Caco-2 (cell line): ENCODE measurements at regions of chr7 and their contacts with region 1.

Region 1: DNA sequence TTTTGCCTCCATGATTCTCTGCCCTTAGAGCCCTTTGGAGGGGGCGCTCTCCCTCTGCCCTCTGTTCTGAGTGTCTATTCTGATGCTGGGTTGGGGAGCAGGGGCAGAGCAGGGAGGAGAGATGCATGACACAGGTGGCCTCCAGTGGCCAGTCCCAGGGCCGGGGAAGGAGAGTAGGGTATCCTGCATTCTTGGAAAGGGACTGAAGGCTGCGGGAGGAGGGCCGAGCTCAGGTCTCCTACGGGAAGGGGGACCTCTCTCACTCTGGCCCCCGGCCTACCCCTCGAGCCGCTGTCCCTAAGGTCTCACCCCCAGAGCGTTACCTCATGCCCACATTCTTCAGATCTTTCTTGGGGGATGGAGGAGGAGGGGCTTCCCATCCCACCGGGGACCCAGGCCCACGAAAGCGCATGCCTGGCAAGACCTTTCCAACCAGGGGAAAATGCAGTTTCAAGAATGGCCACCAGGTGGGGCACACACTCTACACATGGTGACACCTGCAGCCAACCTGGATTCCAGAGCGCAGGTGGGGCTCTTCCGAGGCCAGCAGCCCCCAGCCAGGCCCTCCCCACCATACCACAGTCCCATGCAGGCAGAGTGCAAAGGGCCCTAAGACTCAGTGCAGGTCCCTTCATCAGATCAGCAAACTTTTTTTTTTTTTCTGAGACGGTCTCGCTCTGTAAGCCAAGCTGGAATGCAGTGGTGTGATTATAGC is 86.4 kb downstream of the MYL10 start:
- DNase-seq: peak; percentile 83 to 90
- H3K4me3 ChIP-seq: no peak overlapping the region
- H3K4me3 Mint-ChIP-seq: no peak overlapping the region
- H3K27ac Mint-ChIP-seq: peak overlapping the region; percentile 81
- H3K4me1 ChIP-seq: 0 out of 2 replicates have a peak, but pooled peaks cover 3% of the 10 kb centered on the region
- H3K4me1 Mint-ChIP-seq: peaks cover 6% of the 10 kb centered on the region
- H3K27me3 ChIP-seq: no peaks in the 10 kb centered on the region
- H3K27me3 Mint-ChIP-seq: no peaks in the 10 kb centered on the region
- CTCF ChIP-seq: peak; percentile 86 to 96

Region 2: DNA sequence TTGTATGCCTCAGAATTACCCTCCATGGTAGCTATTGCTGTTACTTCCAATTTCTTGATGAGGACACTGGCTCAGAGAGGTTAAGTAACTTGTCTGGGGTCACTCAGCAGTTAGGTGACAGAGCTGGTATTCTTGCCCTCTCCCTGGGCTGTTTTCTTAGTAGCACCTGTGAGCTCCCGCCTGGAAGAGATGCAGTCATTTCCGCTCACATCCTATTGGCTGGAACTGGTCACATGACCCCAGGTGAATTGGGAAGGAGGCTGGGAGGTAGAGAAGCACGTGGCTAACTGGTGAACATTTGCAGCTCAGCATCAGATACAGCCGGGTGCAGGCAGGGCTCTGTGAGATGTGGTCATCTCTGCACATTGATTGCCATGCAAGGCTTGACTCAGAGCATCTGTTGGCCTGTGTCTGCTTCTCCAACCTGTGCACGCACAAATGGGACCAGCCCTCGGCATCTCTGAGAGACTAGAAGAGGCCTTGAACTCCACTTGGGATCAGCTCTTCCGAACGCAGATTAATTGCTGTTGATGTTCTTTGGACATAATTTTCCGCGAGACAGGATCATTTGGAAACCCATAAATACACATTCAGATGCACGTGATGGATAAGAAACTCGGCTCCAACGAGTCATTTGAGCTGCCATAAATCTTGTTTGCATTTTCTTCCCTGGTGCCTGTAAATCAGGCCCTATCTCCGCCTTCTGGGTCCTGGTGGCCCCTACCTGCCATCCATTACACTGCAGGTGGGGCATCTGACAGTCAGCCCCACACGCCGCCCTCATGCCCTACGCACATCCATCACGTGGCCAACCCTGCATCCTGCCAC is 43.6 kb after region 1 on chr7:
- CTCF ChIA-PET with region 1: interaction called, 16 read pairs
- POLR2A ChIA-PET with region 1: no interaction called
- intact Hi-C with region 1: loop called (anchors 2 kb)
- DNase-seq: peak; percentile 72 to 89
- H3K4me3 ChIP-seq: no peak overlapping the region
- H3K4me3 Mint-ChIP-seq: peak overlapping the region; percentile 44
- H3K27ac Mint-ChIP-seq: peak overlapping the region; percentile 74
- H3K4me1 ChIP-seq: peaks cover 56% of the 10 kb centered on the region
- H3K4me1 Mint-ChIP-seq: peaks cover 48% of the 10 kb centered on the region
- H3K27me3 ChIP-seq: no peaks in the 10 kb centered on the region
- H3K27me3 Mint-ChIP-seq: no peaks in the 10 kb centered on the region
- CTCF ChIP-seq: peak in 1 of 2 experiments; percentile 28

Region 3: DNA sequence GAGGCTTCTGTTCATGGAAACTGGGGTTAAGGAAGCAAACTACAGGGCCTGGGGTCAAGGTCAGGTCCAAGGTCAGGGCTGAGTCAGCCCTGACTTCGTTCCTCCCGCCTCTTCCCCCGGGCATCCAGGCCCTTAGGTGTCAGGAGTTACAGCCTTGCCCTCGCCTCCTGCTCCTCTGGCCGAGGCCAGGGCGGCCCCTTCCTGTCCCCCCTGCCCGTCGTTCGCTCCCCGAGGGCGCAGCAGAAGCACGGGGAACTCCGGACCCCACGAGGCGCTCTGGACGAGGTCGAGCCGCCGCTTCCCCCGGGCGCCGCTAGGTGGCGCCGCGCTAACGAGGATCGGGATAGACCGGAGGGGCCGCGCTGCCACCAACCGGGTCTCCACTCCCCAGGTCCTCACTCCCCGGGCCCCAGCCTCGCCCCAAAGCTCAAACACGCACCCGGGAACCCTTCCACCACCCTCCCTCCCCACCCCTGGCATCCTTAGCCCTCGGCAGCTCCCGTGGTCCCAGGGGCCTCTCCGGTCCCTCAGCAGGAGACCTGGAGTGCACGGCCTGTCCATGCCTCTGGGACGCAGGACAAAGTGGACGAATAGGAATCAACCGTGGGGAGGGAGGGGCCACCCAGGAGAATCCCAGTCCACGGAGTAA is 145.6 kb after region 1 on chr7:
- CTCF ChIA-PET with region 1: interaction called, 5 read pairs
- POLR2A ChIA-PET with region 1: no interaction called
- intact Hi-C with region 1: loop called (anchors 2 kb)
- DNase-seq: peak; percentile 80 to 91
- H3K4me3 ChIP-seq: peak overlapping the region; percentile 42
- H3K4me3 Mint-ChIP-seq: no peak overlapping the region
- H3K27ac Mint-ChIP-seq: no peak overlapping the region
- H3K4me1 ChIP-seq: peaks cover 19% of the 10 kb centered on the region
- H3K4me1 Mint-ChIP-seq: peaks cover 13% of the 10 kb centered on the region
- H3K27me3 ChIP-seq: no peaks in the 10 kb centered on the region
- H3K27me3 Mint-ChIP-seq: no peaks in the 10 kb centered on the region
- CTCF ChIP-seq: peak; percentile 93 to 94

Region 4: DNA sequence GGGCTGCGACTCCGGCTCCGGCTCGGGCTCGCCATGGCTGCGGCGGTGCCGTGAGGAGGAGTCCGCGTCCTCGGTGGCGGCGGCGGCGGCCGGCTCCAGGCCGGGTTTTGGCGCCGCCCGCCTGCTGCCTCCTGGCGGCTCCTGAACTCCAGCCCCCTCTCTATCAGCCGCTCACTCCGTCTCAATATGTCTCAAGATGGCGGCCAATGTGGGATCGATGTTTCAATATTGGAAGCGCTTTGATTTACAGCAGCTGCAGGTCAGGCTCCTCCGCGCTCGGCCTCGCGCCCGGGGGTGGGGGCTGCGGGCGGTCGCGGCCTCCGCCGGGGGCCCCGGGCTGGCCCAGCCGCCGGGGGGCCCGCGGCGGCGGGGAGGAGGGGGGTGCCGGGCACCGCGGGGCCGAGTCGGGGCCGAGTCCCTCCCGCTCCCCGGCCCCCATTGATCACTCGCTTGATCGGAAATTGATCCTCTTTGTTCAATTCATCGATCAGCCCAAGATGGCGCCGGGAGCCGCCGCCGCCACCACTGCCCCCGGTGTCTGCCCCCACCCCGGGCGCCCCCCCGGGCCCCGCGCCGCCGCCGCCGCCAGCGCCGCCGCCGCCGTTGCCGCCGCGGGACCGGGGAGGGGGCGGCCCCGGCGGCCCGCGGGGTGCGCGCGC is 273.3 kb after region 1 on chr7:
- CTCF ChIA-PET with region 1: interaction called, 13 read pairs
- POLR2A ChIA-PET with region 1: no interaction called
- intact Hi-C with region 1: loop called (anchors 1 kb)
- DNase-seq: peak; percentile 85 to 86
- H3K4me3 ChIP-seq: peak overlapping the region; percentile 99
- H3K4me3 Mint-ChIP-seq: peak overlapping the region; percentile 96
- H3K27ac Mint-ChIP-seq: no peak overlapping the region
- H3K4me1 ChIP-seq: peaks cover 32% of the 10 kb centered on the region
- H3K4me1 Mint-ChIP-seq: peaks cover 25% of the 10 kb centered on the region
- H3K27me3 ChIP-seq: no peaks in the 10 kb centered on the region
- H3K27me3 Mint-ChIP-seq: no peaks in the 10 kb centered on the region
- CTCF ChIP-seq: peak in 1 of 2 experiments; percentile 23

Region 5: DNA sequence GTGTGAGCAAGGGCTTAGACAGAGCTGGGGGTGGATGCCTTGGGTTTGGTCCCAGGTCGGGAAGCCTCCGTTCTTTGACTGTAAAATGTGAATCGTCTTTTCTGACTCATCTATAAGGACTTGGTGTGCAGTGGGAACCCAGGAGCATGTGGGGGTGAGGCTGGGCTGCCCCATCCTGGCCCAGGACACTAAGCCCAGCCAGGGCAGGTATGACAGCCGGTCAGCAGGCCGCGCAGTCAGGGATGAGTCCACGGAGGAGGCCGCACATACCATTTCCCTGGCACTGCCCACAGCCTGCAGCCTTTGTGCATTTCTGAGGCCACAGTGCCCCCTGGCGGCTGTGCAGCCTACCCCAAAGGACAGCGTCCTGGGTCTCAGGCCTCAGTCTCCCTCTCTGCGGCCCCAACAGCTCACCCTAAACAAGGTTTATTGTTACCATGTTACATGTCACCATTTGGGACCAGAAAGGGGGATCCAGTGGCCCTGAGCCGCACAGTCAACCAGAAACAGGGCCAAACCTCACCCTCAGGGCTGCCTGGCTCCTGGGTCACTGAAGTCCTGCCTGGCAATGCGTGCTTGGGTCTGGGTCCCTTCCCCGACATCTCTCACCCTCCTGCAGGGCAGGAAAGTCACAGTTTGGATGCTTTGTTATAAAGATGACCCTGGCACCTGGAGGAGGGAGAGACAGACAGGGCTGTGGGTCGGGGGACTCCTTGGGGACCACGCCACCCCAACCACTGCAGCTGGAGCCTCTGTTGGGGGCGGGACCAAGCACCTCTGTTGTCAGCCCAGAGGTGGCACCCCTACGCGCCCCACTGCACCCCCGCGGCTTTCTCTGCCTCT is 729.6 kb after region 1 on chr7:
- CTCF ChIA-PET with region 1: interaction called, 3 read pairs
- POLR2A ChIA-PET with region 1: no interaction called
- intact Hi-C with region 1: loop called (anchors 1 kb)
- DNase-seq: peak; percentile 70 to 83
- H3K4me3 ChIP-seq: no peak overlapping the region
- H3K4me3 Mint-ChIP-seq: no peak overlapping the region
- H3K27ac Mint-ChIP-seq: peak overlapping the region; percentile 42
- H3K4me1 ChIP-seq: peaks cover 10% of the 10 kb centered on the region
- H3K4me1 Mint-ChIP-seq: peaks cover 5% of the 10 kb centered on the region
- H3K27me3 ChIP-seq: no peaks in the 10 kb centered on the region
- H3K27me3 Mint-ChIP-seq: no peaks in the 10 kb centered on the region
- CTCF ChIP-seq: peak; percentile 78 to 96